ENCODE measurements at regions of chr10 and their contacts with region 1.

Region 1: DNA sequence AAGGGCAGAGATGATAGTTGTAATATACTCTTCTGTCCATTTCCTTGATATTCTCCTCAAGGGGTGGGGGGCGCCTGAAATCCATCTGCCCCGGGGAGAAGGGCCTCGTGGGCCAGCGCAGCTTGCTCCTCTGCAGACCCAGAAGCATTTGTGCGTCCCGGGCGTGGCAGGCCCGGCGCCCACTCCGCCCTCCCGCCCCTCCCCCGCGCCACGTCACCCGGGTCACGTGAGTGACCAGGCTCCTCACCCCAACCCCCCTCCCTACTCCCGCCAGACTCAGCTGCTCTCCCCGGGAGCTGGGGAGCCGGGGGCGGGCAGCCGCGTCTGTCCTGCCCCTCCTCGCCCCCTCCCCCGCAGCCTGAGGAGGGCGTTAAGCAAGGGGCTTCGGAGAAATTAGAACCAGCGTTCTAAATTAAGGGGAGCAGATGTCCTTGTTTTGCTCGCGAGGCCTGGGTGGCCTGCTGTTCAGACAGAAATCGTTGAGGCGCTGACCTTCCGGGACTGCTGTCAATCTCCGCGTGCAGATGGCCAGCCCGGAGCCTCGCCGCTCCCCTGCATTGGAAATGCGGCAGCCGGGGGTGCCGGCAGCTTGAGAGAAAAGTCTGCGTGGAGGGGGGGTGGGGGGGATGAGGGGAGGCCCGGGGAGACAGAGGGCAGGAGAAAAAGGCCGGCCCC is 102.1 kb upstream of the ZNF438 start:
- DNase-seq: peak; percentile 83 to 92
- ATAC-seq: peak; percentile 93 to 96 (median 94)
- H3K4me3 ChIP-seq: peak overlapping the region; percentile 70
- H3K27ac ChIP-seq: peak overlapping the region; percentile 95
- H3K4me1 ChIP-seq: peaks cover 10% of the 10 kb centered on the region
- H3K27me3 ChIP-seq: no peaks in the 10 kb centered on the region
- CTCF ChIP-seq: no peak

Region 2: GRCh38 chr10:31041011-31041410 is 92.8 kb before region 1 on chr10:
- intact Hi-C with region 1: loop called in 1 of 2 experiments (anchors 5 kb)
- DNase-seq: no peak
- ATAC-seq: no peak
- H3K4me3 ChIP-seq: no peak overlapping the region
- H3K27ac ChIP-seq: no peak overlapping the region
- H3K4me1 ChIP-seq: no peaks in the 10 kb centered on the region
- H3K27me3 ChIP-seq: no peaks in the 10 kb centered on the region
- CTCF ChIP-seq: no peak

Region 3: GRCh38 chr10:31239961-31240360 is 106.2 kb after region 1 on chr10:
- intact Hi-C with region 1: no loop called
- DNase-seq: no peak
- ATAC-seq: no peak
- H3K4me3 ChIP-seq: no peak overlapping the region
- H3K27ac ChIP-seq: no peak overlapping the region
- H3K4me1 ChIP-seq: peaks cover 5% of the 10 kb centered on the region
- H3K27me3 ChIP-seq: no peaks in the 10 kb centered on the region
- CTCF ChIP-seq: no peak

Measured in psoas muscle (tissue), 8 donors.